Dendritic cell treated with granulocyte-macrophage colony-stimulating factor and Interleukin-4, amounts not matched to agents 40 ng/mL and 50 ng/mL, for 4 days (primary cell): ENCODE measurements at regions of chr2 and their contacts with region 1.

Region 1: GRCh38 chr2:64999754-65000153 is 10.6 kb downstream of the SLC1A4 start:
- H3K4me3 Mint-ChIP-seq: no peak overlapping the region
- H3K27ac Mint-ChIP-seq: no peak overlapping the region
- H3K4me1 Mint-ChIP-seq: peaks cover 11% of the 10 kb centered on the region
- H3K27me3 Mint-ChIP-seq: no peaks in the 10 kb centered on the region

Region 2: DNA sequence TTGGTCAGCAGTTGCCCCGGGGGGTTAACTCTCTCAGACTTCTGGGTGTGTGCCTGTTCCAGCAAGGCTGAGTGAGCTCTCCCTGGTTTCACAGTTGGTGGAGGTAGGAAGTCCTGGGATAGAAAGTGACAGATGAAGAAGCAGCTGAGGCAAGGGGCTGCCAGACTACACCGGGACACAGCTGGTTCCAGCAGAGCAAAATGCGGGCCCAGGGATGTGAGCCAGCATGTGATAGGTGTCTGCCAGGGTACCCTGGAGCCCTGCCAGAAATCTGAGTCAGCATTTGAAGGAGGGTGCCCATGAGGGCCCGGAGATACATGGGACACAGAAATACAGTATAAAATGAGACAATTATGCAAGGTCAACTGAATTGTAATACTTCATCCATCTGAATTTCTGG is 625.1 kb before region 1 on chr2:
- intact Hi-C with region 1: no loop called
- H3K4me3 Mint-ChIP-seq: no peak overlapping the region
- H3K27ac Mint-ChIP-seq: no peak overlapping the region
- H3K4me1 Mint-ChIP-seq: no peaks in the 10 kb centered on the region
- H3K27me3 Mint-ChIP-seq: peaks cover 4% of the 10 kb centered on the region

Region 3: GRCh38 chr2:65031341-65032018 is 31.7 kb after region 1 on chr2:
- intact Hi-C with region 1: loop called (anchors 2 kb)
- H3K4me3 Mint-ChIP-seq: no peak overlapping the region
- H3K27ac Mint-ChIP-seq: peak overlapping the region; percentile 55
- H3K4me1 Mint-ChIP-seq: peaks cover 35% of the 10 kb centered on the region
- H3K27me3 Mint-ChIP-seq: no peaks in the 10 kb centered on the region